Dendritic cell treated with granulocyte-macrophage colony-stimulating factor and Interleukin-4, amounts not matched to agents 40 ng/mL and 50 ng/mL, for 4 days (primary cell): ENCODE measurements at regions of chr3 and their contacts with region 1.

Region 1: DNA sequence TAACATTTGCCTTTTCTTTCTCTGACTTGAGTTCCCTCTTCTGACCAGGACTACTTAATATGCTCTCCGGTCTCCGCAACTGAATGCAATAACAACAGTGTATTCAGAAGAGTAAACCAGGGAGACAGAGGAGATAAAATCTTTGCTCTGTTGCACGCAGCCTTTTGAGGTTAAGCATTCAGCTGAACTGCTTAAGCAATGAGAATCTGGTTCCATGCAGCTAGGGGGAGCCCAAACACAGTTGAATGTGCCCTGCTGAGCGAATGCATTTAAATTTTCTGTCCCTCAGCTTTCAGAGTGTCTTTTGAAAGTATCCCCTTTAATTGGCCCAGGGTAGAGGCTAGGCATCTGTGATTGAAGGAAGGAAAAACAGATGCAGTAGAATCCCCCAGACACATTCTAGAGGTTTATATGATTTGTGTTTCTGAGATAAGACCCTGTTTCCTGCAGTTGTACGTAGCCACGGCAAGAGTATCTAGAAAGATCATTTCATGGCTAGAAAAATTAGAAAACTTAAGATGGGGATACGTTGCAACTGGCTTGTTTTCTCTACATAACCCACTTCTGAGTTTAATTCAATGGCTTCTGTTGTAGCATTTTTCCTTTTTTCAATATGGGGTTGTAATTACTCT is 309.6 kb downstream of the TUSC7 start:
- H3K4me3 Mint-ChIP-seq: no peak overlapping the region
- H3K27ac Mint-ChIP-seq: no peak overlapping the region
- H3K4me1 Mint-ChIP-seq: peaks cover 27% of the 10 kb centered on the region
- H3K27me3 Mint-ChIP-seq: peaks cover 19% of the 10 kb centered on the region

Region 2: GRCh38 chr3:116770815-116771450 is 248.3 kb before region 1 on chr3:
- intact Hi-C with region 1: loop called (anchors 5 kb)
- H3K4me3 Mint-ChIP-seq: no peak overlapping the region
- H3K27ac Mint-ChIP-seq: no peak overlapping the region
- H3K4me1 Mint-ChIP-seq: no peaks in the 10 kb centered on the region
- H3K27me3 Mint-ChIP-seq: peaks cover 3% of the 10 kb centered on the region

Region 3: GRCh38 chr3:116951610-116952009 is 67.6 kb before region 1 on chr3:
- intact Hi-C with region 1: no loop called
- H3K4me3 Mint-ChIP-seq: no peak overlapping the region
- H3K27ac Mint-ChIP-seq: no peak overlapping the region
- H3K4me1 Mint-ChIP-seq: no peaks in the 10 kb centered on the region
- H3K27me3 Mint-ChIP-seq: no peaks in the 10 kb centered on the region

Region 4: GRCh38 chr3:116971531-116971930 is 47.7 kb before region 1 on chr3:
- intact Hi-C with region 1: no loop called
- H3K4me3 Mint-ChIP-seq: no peak overlapping the region
- H3K27ac Mint-ChIP-seq: no peak overlapping the region
- H3K4me1 Mint-ChIP-seq: no peaks in the 10 kb centered on the region
- H3K27me3 Mint-ChIP-seq: no peaks in the 10 kb centered on the region

Region 5: GRCh38 chr3:117084739-117085270 is 65.6 kb after region 1 on chr3:
- intact Hi-C with region 1: no loop called
- H3K4me3 Mint-ChIP-seq: no peak overlapping the region
- H3K27ac Mint-ChIP-seq: peak overlapping the region; percentile 3
- H3K4me1 Mint-ChIP-seq: peaks cover 31% of the 10 kb centered on the region
- H3K27me3 Mint-ChIP-seq: no peaks in the 10 kb centered on the region

Region 6: DNA sequence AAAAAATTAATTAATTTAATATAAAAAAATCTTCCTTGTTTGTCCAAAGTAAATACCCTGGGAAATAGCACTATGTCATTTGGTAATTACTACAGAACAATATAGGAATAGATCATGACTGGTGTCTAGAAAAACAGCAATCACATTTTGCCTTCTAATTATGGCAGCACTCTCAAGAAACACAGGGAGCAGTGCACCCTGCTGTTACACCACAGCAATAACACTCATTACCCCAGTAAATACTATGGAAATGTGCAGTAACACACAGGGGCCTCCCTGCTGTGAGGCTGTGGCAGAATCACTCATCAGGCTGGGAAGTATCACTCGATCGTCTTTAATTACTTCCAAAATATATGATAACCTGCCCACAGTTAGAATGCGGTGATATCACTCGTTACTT is 336.4 kb after region 1 on chr3:
- intact Hi-C with region 1: loop called (anchors 2 kb)
- H3K4me3 Mint-ChIP-seq: no peak overlapping the region
- H3K27ac Mint-ChIP-seq: no peak overlapping the region
- H3K4me1 Mint-ChIP-seq: no peaks in the 10 kb centered on the region
- H3K27me3 Mint-ChIP-seq: no peaks in the 10 kb centered on the region

Region 7: DNA sequence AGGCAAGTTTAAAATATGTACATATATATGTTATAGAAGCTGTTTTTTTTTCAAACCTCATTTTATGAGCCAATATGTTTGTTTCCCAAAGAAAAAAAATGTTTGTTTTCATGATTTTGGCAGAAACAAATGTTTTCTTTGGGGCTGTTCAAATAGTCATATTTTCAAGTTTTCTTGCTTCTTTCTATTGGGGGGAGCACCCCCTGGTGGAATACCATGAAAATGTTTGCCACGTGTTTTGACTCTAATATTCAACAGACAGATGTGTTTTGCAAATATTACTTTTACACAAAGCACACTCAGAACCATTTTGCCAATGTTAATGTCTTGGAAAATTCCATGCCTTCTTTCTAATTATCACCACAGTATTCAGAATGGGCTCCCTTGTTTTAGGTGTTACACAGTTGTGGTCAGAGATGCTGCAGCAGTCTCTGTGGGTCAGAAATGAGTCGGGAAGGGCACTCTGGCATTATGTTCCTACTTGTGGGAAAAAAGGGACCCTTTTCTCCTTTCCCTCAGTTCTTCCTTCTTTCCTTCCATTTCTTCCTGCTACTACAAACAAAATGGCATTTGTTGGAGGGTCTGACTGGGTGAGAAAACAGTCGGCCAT is 507.4 kb after region 1 on chr3:
- intact Hi-C with region 1: loop called (anchors 1 kb)
- H3K4me3 Mint-ChIP-seq: no peak overlapping the region
- H3K27ac Mint-ChIP-seq: no peak overlapping the region
- H3K4me1 Mint-ChIP-seq: peaks cover 5% of the 10 kb centered on the region
- H3K27me3 Mint-ChIP-seq: peaks cover 10% of the 10 kb centered on the region

Region 8: GRCh38 chr3:117997201-117998049 is 978.2 kb after region 1 on chr3:
- intact Hi-C with region 1: loop called (anchors 10 kb)
- H3K4me3 Mint-ChIP-seq: no peak overlapping the region
- H3K27ac Mint-ChIP-seq: no peak overlapping the region
- H3K4me1 Mint-ChIP-seq: no peaks in the 10 kb centered on the region
- H3K27me3 Mint-ChIP-seq: peaks cover 12% of the 10 kb centered on the region